Aorta (tissue), 5 donors: ENCODE measurements at regions of chr12 and their contacts with region 1.

Region 1: GRCh38 chr12:124388679-124389536 is 94.0 kb downstream of the RFLNA start:
- DNase-seq: peak; percentile 94 to 97
- ATAC-seq: peak; percentile 82
- H3K4me3 ChIP-seq: peak overlapping the region; percentile 19 to 46
- H3K27ac ChIP-seq: peak overlapping the region in 1 of 2 donors; percentile 95
- H3K4me1 ChIP-seq: no peaks in the 10 kb centered on the region
- H3K27me3 ChIP-seq: no peaks in the 10 kb centered on the region

Region 2: GRCh38 chr12:124147575-124147974 is 241.3 kb before region 1 on chr12:
- intact Hi-C with region 1: no loop called
- DNase-seq: no peak
- ATAC-seq: no peak
- H3K4me3 ChIP-seq: no peak overlapping the region
- H3K27ac ChIP-seq: no peak overlapping the region
- H3K4me1 ChIP-seq: no peaks in the 10 kb centered on the region
- H3K27me3 ChIP-seq: no peaks in the 10 kb centered on the region

Region 3: GRCh38 chr12:124338436-124338835 is 50.5 kb before region 1 on chr12:
- intact Hi-C with region 1: no loop called
- DNase-seq: no peak
- ATAC-seq: no peak
- H3K4me3 ChIP-seq: no peak overlapping the region
- H3K27ac ChIP-seq: no peak overlapping the region
- H3K4me1 ChIP-seq: no peaks in the 10 kb centered on the region
- H3K27me3 ChIP-seq: no peaks in the 10 kb centered on the region

Region 4: GRCh38 chr12:124422570-124423523 is 33.9 kb after region 1 on chr12:
- intact Hi-C with region 1: loop called (anchors 2 to 5 kb)
- DNase-seq: peak; percentile 96 to 97
- ATAC-seq: peak; percentile 91
- H3K4me3 ChIP-seq: no peak overlapping the region
- H3K27ac ChIP-seq: peak overlapping the region; percentile 71 to 98
- H3K4me1 ChIP-seq: no peaks in the 10 kb centered on the region
- H3K27me3 ChIP-seq: no peaks in the 10 kb centered on the region

Region 5: DNA sequence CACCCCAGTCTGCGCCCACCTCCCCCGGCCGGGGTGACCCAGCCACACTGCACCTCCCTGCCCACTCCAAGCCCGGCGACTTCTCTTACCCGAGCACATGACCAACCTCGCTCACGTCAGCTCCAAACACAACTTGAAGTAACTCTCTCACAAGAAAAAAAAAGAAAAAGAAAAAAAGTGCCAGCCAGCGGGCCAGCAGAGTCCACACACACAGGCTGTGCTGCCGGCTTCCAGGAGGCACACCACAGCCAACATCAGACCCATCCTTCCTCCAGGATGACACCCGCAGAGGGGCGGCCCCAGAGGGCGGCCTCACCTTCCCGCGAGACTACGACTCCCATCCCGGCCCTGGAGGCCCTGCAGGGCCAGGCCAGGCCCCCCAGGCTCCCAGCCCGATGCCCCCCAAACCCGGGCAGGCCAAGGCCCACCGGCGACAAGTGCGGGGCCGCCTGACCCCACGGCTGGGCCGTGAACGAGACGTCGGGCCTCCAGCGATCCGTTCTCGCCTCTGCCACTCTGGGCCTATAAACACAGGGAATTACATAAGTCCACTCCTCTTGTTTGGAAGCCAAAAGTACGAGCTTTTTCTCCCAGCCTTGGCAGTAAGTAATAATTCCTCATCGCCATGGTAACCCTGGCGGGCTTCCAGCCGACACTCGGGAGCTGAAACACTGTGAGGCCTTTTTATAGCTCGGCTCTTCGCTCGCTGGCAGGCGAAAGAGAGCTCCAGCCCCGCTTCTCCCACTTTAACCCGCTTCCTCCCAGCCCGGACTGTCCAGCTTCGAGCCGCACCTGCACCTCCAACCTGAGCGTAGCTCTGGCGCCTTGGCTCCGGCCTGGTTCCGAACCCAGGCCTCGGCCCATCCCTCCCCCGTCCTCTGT is 129.4 kb after region 1 on chr12:
- intact Hi-C with region 1: loop called (anchors 10 kb)
- DNase-seq: peak; percentile 98 to 99
- ATAC-seq: peak; percentile 84
- H3K4me3 ChIP-seq: no peak overlapping the region
- H3K27ac ChIP-seq: peak overlapping the region; percentile 87 to 98
- H3K4me1 ChIP-seq: no peaks in the 10 kb centered on the region
- H3K27me3 ChIP-seq: no peaks in the 10 kb centered on the region

Region 6: DNA sequence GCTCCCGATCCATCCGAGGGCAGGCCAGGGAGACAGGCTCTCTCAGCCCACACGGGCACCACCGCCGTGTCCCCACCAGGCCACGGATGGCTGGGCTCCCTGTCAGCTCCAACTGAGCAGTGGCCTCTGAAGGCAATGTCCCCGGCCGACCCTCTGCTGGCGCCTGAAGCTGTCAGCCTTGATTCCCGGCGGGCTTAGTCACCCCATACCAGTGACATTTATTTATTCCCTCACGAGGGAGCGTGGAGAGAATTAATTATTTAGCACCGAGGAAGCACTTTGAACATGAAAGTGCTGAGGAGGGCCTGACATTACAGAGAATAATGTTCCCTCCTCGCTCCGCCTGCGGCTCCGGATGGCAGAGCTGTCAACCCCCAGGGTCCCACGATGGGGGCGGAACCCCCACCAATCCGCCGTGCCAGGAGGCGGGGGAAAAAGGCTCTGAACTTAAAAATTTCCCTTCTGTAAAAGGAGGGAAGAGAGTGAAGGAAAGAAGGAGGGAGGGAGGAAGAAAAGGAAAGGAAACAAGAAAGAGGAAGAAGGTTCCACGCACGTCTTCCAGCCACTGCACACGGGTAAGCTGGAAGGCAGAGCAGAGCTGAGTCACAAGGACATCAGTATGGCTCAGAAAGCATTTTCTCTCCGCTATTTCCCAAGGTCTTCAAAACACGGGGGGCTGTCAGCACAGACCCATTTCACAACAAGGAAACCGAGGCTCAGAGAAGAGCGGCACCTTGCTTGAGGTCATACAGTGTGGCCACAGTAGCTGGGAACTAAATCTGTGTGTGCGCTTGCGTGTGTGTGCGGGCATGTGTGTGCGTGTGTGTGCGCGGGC is 287.2 kb after region 1 on chr12:
- intact Hi-C with region 1: loop called in 1 of 2 experiments (anchors 10 kb)
- DNase-seq: peak; percentile 81 to 91
- ATAC-seq: peak; percentile 56
- H3K4me3 ChIP-seq: peak overlapping the region in 1 of 2 donors; percentile 14
- H3K27ac ChIP-seq: peak overlapping the region in 1 of 2 donors; percentile 41
- H3K4me1 ChIP-seq: no peaks in the 10 kb centered on the region
- H3K27me3 ChIP-seq: no peaks in the 10 kb centered on the region